Head of caudate nucleus (tissue), 42 donors: ENCODE measurements at regions of chr13 and their contacts with region 1.

Region 1: GRCh38 chr13:49308089-49308875 is 60.6 kb downstream of the CDADC1 start:
- DNase-seq: peak in 41 of 42 donors; percentile 36 to 86 (median 70)

Region 2: GRCh38 chr13:49585220-49586157 is 277.2 kb after region 1 on chr13 and contains the start of gene RCBTB1:
- intact Hi-C with region 1: loop called (anchors 5 kb)
- DNase-seq: peak; percentile 26 to 84 (median 68)